HepG2 (cell line): ENCODE measurements at regions of chrX and their contacts with region 1.

Region 1: DNA sequence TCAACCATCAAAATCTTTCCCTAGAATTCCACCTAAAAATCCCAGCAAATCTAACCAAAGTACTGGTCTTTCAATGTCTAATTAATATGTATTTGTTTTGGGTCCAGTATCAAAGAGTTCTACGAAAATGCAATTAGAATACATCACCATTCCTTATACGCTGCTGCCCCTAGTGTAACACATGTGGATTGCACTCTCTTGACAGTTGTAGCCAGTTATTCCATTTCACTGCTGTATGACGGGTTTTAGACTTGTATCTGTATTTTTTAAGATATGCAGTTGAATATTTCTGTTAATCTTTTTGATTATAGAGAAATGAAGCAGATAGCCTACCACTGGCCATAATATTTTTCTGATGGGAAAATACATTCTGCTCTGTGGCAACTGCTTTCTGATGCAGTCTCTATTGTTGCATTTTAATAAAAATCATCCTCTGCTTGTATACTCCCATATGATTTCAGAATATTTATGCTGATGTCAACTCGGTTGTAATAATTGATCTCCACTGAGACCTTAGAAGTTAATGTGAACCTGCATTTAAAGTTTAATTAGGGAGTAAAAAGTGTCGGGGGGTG is 17.1 kb upstream of the PAGE2B start:
- DNase-seq: peak; percentile 7
- ATAC-seq: no peak
- H3K4me3 ChIP-seq: no peak overlapping the region
- H3K27ac ChIP-seq: no peak overlapping the region
- H3K4me1 ChIP-seq: no peaks in the 10 kb centered on the region
- H3K27me3 ChIP-seq: no peaks in the 10 kb centered on the region
- CTCF ChIP-seq: peak; percentile 63
- EP300 ChIP-seq: no peak
- POLR2A ChIP-seq: no peak
- RAD21 ChIP-seq: peak; percentile 66

Region 2: GRCh38 chrX:54825716-54826438 is 231.9 kb before region 1 on chrX:
- CTCF ChIA-PET with region 1: interaction called, 6 read pairs
- POLR2A ChIA-PET with region 1: no interaction called
- in situ Hi-C with region 1: no loop called
- intact Hi-C with region 1: loop called (anchors 5 kb)
- DNase-seq: no peak
- ATAC-seq: peak; percentile 70
- H3K4me3 ChIP-seq: no peak overlapping the region
- H3K27ac ChIP-seq: no peak overlapping the region
- H3K4me1 ChIP-seq: no peaks in the 10 kb centered on the region
- H3K27me3 ChIP-seq: no peaks in the 10 kb centered on the region
- CTCF ChIP-seq: peak; percentile 41
- EP300 ChIP-seq: no peak
- POLR2A ChIP-seq: no peak
- RAD21 ChIP-seq: no peak

Region 3: GRCh38 chrX:54891573-54891972 is 166.2 kb before region 1 on chrX:
- CTCF ChIA-PET with region 1: interaction called, 17 read pairs
- POLR2A ChIA-PET with region 1: no interaction called
- in situ Hi-C with region 1: no loop called
- intact Hi-C with region 1: no loop called
- DNase-seq: peak; percentile 21
- ATAC-seq: peak; percentile 69
- H3K4me3 ChIP-seq: no peak overlapping the region
- H3K27ac ChIP-seq: no peak overlapping the region
- H3K4me1 ChIP-seq: no peaks in the 10 kb centered on the region
- H3K27me3 ChIP-seq: no peaks in the 10 kb centered on the region
- CTCF ChIP-seq: peak; percentile 65
- EP300 ChIP-seq: no peak
- POLR2A ChIP-seq: no peak
- RAD21 ChIP-seq: peak; percentile 63; the same call in 1 of the 2 replicates

Region 4: DNA sequence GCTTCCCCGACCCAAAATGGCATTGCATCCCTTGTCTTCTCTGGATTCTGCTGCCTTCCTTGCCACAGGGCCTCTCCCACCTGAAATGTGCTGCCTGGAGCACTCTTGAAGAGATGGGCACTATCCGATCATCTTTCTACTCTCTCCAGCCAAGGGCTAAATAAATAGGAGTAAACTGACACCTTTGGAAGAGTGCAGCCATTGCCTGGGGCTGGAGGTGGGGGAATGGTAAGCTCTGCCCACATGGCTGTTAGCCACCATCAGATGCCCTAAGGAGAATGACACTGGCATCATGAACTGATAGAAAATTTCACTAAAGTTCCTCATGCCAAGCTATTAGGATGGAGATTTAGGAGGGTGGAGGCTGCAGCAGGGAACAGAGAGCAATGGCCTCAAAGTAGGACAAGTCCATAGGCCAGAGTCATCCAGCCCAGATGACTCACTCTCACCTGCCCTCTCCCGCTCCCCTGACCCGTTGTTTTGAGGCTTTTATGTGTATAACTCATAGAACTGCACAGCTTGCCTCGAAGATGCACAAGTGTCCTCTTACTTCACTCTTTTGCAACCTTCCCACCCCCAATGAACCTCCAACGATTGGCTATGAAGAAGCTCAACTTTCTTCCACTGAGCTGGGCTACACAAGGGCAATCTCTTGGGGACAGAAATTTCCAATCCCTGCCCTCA is 63.0 kb before region 1 on chrX:
- CTCF ChIA-PET with region 1: no interaction called
- POLR2A ChIA-PET with region 1: no interaction called
- in situ Hi-C with region 1: no loop called
- intact Hi-C with region 1: no loop called
- DNase-seq: no peak
- ATAC-seq: peak; percentile 62
- H3K4me3 ChIP-seq: peak overlapping the region in 1 of 3 experiments; percentile 62; a peak in 2 of 6 replicates
- H3K27ac ChIP-seq: peak overlapping the region; percentile 70
- H3K4me1 ChIP-seq: peaks cover 64% of the 10 kb centered on the region
- H3K27me3 ChIP-seq: no peaks in the 10 kb centered on the region; a peak in 1 of 5 replicates
- CTCF ChIP-seq: no peak
- EP300 ChIP-seq: no peak
- POLR2A ChIP-seq: no peak
- RAD21 ChIP-seq: no peak

Region 5: DNA sequence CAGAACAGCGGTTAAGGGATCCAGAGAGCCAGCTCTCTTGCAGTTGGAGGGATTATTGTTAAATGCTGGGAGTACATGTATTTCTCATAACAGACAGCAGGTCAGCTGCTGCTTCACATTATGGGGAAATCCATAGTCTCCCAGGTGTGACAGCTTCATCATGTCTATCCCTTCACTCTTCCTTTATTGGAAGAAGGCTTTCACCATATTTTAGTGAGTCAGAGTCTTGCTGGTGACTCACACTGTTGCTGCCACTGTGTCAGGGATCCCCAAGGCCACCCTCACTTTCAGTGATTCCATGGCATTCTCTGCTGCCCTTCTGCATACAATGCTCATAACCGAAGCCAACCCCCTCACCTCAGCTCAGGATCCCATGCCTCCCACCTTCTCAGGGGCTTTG is 129.5 kb after region 1 on chrX:
- CTCF ChIA-PET with region 1: no interaction called
- POLR2A ChIA-PET with region 1: no interaction called
- in situ Hi-C with region 1: no loop called
- intact Hi-C with region 1: no loop called
- DNase-seq: no peak
- ATAC-seq: no peak
- H3K4me3 ChIP-seq: no peak overlapping the region
- H3K27ac ChIP-seq: no peak overlapping the region
- H3K4me1 ChIP-seq: no peaks in the 10 kb centered on the region
- H3K27me3 ChIP-seq: no peaks in the 10 kb centered on the region; a peak in 1 of 5 replicates
- CTCF ChIP-seq: no peak
- EP300 ChIP-seq: no peak
- POLR2A ChIP-seq: no peak
- RAD21 ChIP-seq: no peak